ENCODE measurements at regions of chr4 and their contacts with region 1.

Region 1: DNA sequence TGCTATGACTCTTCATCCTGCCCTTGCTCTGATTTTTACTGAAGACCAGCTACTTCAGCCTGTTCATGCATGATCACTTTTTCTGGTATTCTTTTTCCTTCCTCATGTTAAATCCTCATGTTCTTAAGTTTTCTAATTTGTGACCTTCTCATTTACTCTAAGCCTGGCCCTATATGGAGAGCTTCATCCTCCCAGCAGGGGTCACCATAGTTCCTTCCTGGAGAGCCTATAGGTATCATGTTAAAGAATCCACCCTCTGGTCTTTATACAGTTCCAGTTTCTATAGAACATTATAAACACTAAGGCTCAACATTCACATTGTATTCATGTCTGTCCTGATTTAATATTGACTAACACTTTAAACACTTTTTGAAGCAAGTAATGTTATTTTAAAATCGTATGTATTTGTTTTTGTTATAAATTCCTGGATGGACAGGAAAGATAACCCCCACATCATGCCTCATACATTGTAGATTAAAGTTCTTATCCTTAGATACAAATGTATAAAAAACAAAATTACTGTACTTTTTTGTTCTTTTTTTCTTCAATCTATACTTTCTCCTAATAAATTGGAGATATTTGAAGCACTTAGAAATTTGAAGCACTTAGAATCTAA is 53.8 kb upstream of the OTUD4 start:
- DNase-seq: peak; percentile 65
- H3K4me3 ChIP-seq: no peak overlapping the region; a peak in 1 of 4 replicates
- H3K27ac ChIP-seq: peak overlapping the region in 1 of 2 experiments; percentile 68; a peak in 1 of 4 replicates
- H3K4me1 ChIP-seq: peaks cover 0 to 4% of the 10 kb centered on the region in 2 experiments; a peak in 2 of 4 replicates
- H3K27me3 ChIP-seq: no peaks in the 10 kb centered on the region
- CTCF ChIP-seq: peak; percentile 95
- EP300 ChIP-seq: no peak
- RAD21 ChIP-seq: peak; percentile 96

Region 2: GRCh38 chr4:145171911-145172310 is 62.3 kb before region 1 on chr4:
- CTCF ChIA-PET with region 1: no interaction called
- POLR2A ChIA-PET with region 1: no interaction called
- DNase-seq: no peak
- H3K4me3 ChIP-seq: no peak overlapping the region
- H3K27ac ChIP-seq: no peak overlapping the region
- H3K4me1 ChIP-seq: peaks cover 0 to under 1% of the 10 kb centered on the region in 2 experiments; a peak in 3 of 4 replicates
- H3K27me3 ChIP-seq: no peaks in the 10 kb centered on the region
- CTCF ChIP-seq: no peak
- EP300 ChIP-seq: no peak
- RAD21 ChIP-seq: no peak

Region 3: DNA sequence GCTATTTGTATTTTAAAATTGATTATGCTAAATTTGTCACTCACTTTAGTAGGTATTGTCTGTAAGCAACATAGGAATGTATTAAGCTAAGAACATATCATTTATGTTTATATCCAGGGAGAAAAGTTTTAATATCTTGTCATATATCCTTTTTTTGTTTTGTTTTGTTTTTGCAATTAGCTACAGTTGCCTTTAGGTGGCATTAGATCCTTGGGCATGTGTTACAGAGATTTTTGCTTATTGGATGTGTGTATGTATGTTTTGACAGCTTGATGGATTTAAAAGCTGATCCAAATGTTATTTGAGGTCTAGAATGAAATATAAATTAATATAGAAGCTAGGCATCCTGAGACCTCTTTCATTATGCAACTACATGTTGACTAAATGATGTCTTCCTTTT is 17.7 kb before region 1 on chr4:
- CTCF ChIA-PET with region 1: interaction called, 11 read pairs
- POLR2A ChIA-PET with region 1: no interaction called
- DNase-seq: peak; percentile 13
- H3K4me3 ChIP-seq: no peak overlapping the region; a peak in 1 of 4 replicates
- H3K27ac ChIP-seq: no peak overlapping the region
- H3K4me1 ChIP-seq: no peaks in the 10 kb centered on the region; a peak in 1 of 4 replicates
- H3K27me3 ChIP-seq: no peaks in the 10 kb centered on the region
- CTCF ChIP-seq: peak; percentile 82
- EP300 ChIP-seq: no peak
- RAD21 ChIP-seq: peak; percentile 84

Region 4: GRCh38 chr4:145557720-145558119 is 323.5 kb after region 1 on chr4:
- CTCF ChIA-PET with region 1: interaction called, 11 read pairs
- POLR2A ChIA-PET with region 1: no interaction called
- DNase-seq: peak; percentile 67
- H3K4me3 ChIP-seq: no peak overlapping the region; a peak in 1 of 4 replicates
- H3K27ac ChIP-seq: no peak overlapping the region
- H3K4me1 ChIP-seq: no peaks in the 10 kb centered on the region; a peak in 1 of 4 replicates
- H3K27me3 ChIP-seq: no peaks in the 10 kb centered on the region
- CTCF ChIP-seq: peak; percentile 89
- EP300 ChIP-seq: no peak
- RAD21 ChIP-seq: peak; percentile 87

Region 5: DNA sequence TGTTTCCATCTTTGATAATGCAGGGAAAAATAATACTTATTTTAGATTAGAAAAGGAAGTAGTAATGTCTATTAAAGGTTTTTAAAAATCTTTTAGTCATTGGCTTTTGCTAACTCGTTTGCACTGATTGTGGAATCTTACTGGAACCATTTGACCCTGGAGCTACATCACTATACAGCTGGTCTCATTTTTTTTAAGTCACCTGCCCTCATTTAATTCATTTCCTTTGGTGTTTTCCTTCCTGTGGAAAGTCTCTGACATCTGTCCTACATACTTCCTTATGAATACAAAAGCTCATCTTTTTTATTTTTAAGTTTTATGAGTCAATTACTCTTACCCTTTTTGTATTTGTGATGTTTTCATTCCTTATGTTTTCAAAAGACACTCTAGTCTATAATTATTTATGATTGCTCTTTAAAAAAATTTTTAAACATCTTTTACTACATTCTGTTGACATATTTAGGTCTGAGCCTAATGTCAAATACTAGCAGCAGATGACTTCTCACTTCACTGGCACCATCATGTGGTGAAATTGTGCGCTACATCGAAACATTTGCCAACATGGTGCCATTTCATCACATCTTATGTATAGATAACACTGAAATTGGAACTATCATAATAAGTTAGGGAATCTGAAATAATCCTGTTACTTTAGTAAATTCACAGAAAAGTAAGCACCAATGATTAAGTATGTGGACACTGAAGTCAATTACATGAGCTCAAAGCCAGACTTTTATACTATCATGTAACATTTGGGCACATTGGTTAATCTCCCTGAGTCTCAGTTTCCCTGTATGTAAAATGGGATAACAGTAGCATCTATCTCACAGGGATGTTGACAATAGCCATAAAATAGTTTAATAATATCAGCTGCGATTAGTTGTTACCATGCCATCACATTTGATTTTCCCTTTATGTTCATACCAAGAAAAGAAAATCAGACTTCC is 375.6 kb after region 1 on chr4:
- CTCF ChIA-PET with region 1: interaction called, 60 read pairs
- POLR2A ChIA-PET with region 1: no interaction called
- DNase-seq: peak; percentile 41
- H3K4me3 ChIP-seq: no peak overlapping the region; a peak in 1 of 4 replicates
- H3K27ac ChIP-seq: no peak overlapping the region
- H3K4me1 ChIP-seq: no peaks in the 10 kb centered on the region
- H3K27me3 ChIP-seq: no peaks in the 10 kb centered on the region
- CTCF ChIP-seq: peak; percentile 91
- EP300 ChIP-seq: no peak
- RAD21 ChIP-seq: peak; percentile 95

Region 6: DNA sequence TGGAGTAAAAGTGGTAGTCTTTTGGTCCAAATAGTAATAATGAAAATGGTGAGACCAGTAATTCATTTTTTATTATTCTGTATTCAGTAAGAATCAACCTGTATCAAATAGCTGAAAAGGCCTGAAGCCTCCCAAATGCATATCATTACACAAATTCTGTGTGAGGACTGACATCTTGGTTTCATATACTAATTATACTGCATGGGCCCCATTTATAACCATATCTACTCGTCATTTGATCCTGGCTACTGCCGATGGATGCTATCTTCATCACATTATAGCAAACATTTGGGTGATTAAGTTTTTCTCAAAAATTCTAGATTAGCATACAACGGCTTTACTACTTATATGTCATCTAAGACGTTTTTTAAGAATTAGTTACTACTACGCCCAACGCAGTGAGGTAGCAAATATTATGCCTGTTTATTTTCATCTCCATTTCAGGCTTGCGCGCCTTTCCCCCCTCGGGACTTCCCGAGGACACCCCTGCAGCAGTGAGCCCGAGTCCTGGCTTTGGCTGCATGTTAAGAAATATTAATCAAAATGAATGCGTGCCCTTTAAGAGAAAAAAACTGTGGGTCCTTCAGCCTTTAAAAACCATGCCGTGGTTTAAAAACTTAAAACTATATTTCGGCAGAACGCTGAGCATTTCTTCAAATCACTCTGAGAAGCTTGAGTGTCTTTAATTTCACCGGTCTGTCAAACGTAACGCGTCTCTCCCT is 384.2 kb after region 1 on chr4:
- CTCF ChIA-PET with region 1: interaction called, 23 read pairs
- POLR2A ChIA-PET with region 1: no interaction called
- DNase-seq: peak; percentile 29
- H3K4me3 ChIP-seq: peak overlapping the region; percentile 93 to 94
- H3K27ac ChIP-seq: peak overlapping the region; percentile 90 to 96
- H3K4me1 ChIP-seq: peaks cover 6 to 9% of the 10 kb centered on the region in 2 experiments; a peak in 3 of 4 replicates
- H3K27me3 ChIP-seq: no peaks in the 10 kb centered on the region
- CTCF ChIP-seq: no peak
- EP300 ChIP-seq: no peak
- RAD21 ChIP-seq: no peak

Region 7: DNA sequence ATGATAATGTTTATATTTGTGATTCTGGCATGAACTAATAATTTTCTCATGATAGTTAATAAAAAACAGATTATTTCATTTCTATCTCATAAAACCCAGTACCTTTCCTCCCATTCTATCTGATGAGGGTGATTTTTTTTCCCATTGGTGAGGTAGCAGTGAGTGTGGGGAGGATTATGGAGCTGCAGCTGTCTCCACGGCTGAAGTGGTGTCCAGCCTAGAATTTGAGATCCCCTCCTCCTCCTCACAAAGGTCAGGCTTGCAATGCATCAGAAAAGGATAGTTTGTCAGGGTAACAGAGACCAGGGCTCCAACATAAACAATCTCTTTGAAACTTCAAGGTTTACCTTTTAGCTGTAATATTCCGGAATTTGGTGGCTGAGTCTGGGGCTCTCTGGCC is 506.6 kb after region 1 on chr4:
- CTCF ChIA-PET with region 1: no interaction called
- POLR2A ChIA-PET with region 1: no interaction called
- DNase-seq: no peak
- H3K4me3 ChIP-seq: no peak overlapping the region
- H3K27ac ChIP-seq: no peak overlapping the region
- H3K4me1 ChIP-seq: peaks cover 10% of the 10 kb centered on the region in 2 experiments
- H3K27me3 ChIP-seq: no peaks in the 10 kb centered on the region
- CTCF ChIP-seq: no peak
- EP300 ChIP-seq: no peak
- RAD21 ChIP-seq: no peak

Measured in SK-N-SH (cell line).